ENCODE measurements at regions of chr20 and their contacts with region 1.

Region 1: DNA sequence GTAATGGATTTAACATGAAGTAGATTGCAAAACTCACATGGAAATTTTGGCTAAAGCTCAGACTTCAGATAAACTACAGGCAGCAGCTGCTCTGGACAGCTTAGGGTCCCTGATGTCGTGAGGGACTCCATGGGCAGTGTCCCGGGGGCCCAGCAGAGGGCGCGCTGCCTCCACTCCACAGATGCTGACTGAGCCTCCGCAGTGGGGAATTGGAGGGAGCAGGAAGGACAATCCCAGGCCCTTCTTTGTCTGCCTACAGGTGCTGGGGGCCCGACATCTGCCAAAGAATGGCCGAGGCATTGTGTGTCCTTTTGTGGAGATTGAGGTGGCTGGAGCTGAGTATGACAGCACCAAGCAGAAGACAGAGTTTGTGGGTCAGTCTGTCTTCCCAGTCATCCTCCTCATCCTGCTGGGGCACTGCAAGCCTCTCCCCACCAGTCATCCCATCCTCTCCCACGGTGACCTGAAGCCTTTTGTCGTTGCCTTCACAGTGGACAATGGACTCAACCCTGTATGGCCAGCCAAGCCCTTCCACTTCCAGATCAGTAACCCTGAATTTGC is 35.9 kb downstream of the PLCG1 start:
- DNase-seq: peak; percentile 78
- H3K4me3 ChIP-seq: no peak overlapping the region
- H3K27ac ChIP-seq: no peak overlapping the region
- H3K4me1 ChIP-seq: peaks cover 5% of the 10 kb centered on the region
- H3K27me3 ChIP-seq: no peaks in the 10 kb centered on the region
- CTCF ChIP-seq: peak; percentile 94

Region 2: GRCh38 chr20:41110930-41111577 is 62.2 kb before region 1 on chr20:
- CTCF ChIA-PET with region 1: no interaction called
- POLR2A ChIA-PET with region 1: no interaction called
- intact Hi-C with region 1: no loop called
- DNase-seq: no peak
- H3K4me3 ChIP-seq: no peak overlapping the region
- H3K27ac ChIP-seq: no peak overlapping the region
- H3K4me1 ChIP-seq: no peaks in the 10 kb centered on the region
- H3K27me3 ChIP-seq: no peaks in the 10 kb centered on the region
- CTCF ChIP-seq: no peak

Region 3: DNA sequence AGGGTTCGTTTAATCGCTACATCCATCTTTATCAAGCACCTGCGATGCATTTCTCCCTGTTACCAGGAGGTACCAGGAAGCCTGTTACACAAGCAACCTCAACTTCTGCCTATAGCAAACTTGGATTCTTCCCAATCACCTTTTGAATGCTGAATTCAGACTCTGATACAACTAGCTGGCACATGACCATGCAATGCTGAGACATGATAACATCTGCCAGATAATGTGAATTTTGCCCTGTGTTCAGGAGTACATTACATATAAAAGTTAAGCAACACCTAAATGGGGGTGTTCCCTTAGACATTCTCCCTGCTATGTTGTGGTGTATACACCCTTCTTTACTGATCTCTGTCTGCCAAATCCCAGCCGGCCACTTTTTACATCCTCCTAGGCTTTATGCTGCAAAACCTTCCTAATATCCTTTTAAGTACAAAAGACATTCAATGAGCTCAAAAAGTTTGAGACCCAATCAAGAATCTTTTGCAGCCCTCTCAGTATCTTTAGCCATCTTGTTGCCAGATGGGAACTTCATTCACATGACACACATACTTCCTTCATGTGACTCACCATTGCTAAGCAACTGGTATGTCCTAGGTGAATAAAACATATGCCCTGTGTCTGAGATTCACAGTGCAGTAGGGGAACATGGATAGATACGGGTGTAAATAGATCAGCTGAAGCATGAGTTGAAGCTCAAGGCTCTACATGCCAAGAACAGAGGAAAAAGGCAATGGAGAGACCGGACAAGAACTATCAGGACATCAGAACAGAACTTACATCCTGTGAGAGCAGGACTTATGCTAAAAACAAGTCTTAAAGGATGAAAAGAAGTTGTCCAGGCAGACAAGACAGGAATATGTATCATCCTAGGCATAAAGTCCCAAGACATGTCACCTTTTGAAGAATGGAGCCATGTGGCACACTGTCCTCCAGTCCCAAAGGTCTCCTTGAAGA is 60.0 kb after region 1 on chr20:
- CTCF ChIA-PET with region 1: interaction called, 10 read pairs
- POLR2A ChIA-PET with region 1: no interaction called
- intact Hi-C with region 1: loop called (anchors 1 kb)
- DNase-seq: no peak
- H3K4me3 ChIP-seq: peak overlapping the region; percentile 31
- H3K27ac ChIP-seq: no peak overlapping the region
- H3K4me1 ChIP-seq: peaks cover 24% of the 10 kb centered on the region
- H3K27me3 ChIP-seq: no peaks in the 10 kb centered on the region
- CTCF ChIP-seq: no peak

Region 4: GRCh38 chr20:41339507-41340326 is 166.5 kb after region 1 on chr20:
- CTCF ChIA-PET with region 1: interaction called, 15 read pairs
- POLR2A ChIA-PET with region 1: no interaction called
- intact Hi-C with region 1: loop called (anchors 1 kb)
- DNase-seq: peak; percentile 70
- H3K4me3 ChIP-seq: peak overlapping the region; percentile 41
- H3K27ac ChIP-seq: no peak overlapping the region
- H3K4me1 ChIP-seq: peaks cover 5% of the 10 kb centered on the region
- H3K27me3 ChIP-seq: no peaks in the 10 kb centered on the region
- CTCF ChIP-seq: peak; percentile 98